GM13977 (cell line): ENCODE measurements at regions of chr9 and their contacts with region 1.

Region 1: DNA sequence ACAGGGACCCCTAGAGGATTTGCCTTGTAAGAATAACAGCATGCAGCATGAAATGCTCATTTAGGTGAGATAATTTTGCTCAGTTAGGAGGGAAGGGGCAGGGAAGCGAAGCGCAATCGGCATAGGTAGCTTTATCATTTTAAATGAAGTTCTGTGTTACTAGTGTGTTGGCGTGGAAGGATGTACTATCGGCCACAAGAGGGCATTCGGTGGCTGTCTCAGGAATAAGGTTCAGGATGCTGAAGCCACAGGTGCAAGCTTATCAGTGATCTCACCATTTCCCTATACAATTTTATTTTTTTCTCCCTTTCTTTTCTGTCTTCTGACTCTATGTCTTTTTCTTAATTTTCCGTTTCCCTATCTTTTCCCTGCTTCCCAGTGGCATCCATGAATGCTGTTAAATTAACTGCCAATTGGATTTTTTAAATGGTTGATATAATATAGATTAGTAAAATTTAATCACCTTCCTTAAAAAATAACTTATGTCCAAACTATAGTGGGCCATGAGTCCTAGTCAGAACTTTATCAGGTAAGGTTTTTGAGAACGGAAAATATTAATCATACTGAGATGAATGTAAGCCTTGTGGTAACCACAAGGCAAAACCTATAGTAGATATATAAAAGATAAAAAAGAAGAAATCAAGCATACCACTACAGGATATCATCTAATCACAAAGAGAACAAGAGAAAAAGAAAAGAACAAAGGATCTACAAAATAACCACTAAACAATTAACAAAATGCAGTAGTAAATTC is 1.2 kb upstream of the INSL6 start:
- DNase-seq: peak; percentile 69
- CTCF ChIP-seq: peak; percentile 45

Region 2: GRCh38 chr9:4792572-4793458 is 393.8 kb before region 1 on chr9 and contains the start of gene RCL1:
- in situ Hi-C with region 1: no loop called
- DNase-seq: peak; percentile 98
- CTCF ChIP-seq: no peak

Region 3: GRCh38 chr9:5425006-5425628 is 238.5 kb after region 1 on chr9:
- in situ Hi-C with region 1: loop called (anchors 10 kb)
- DNase-seq: peak; percentile 45
- CTCF ChIP-seq: peak; percentile 50

Region 4: GRCh38 chr9:5593904-5594303 is 407.3 kb after region 1 on chr9:
- in situ Hi-C with region 1: loop called (anchors 5 kb)
- DNase-seq: peak; percentile 44
- CTCF ChIP-seq: no peak